ENCODE measurements at regions of chr1 and their contacts with region 1.

Region 1: GRCh38 chr1:43227143-43227764 is 42.5 kb upstream of the TMEM125 start:
- DNase-seq: peak; percentile 82
- CTCF ChIP-seq: peak; percentile 93

Region 2: DNA sequence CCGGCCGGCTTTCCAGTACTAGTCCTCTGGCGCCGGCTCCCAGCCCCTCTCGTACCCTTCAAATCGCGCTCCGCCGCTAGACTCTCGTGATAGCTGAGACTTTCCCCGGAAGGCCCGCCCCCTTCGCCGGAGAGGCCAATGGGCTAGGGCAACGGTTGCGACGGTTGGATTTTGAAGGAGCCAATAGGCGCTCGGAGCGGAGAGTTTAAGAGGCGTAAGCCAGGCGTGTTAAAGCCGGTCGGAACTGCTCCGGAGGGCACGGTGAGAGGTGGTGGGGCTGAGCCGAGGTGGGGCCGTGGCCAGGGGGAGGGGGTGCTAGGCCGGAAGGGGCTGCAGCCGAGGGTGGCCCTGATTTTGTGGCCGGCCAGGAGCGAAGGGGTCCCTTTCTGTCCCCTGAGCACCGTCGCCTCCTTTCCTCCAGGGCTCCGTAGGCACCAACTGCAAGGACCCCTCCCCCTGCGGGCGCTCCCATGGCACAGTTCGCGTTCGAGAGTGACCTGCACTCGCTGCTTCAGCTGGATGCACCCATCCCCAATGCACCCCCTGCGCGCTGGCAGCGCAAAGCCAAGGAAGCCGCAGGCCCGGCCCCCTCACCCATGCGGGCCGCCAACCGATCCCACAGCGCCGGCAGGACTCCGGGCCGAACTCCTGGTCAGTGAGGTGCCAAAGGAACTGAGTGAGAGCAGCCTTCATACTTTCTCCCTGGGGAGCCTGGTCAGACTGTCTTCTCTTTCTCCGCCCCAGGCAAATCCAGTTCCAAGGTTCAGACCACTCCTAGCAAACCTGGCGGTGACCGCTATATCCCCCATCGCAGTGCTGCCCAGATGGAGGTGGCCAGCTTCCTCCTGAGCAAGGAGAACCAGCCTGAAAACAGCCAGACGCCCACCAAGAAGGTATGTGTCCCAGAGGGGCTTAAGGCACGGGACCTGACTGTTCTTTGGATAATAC is 131.8 kb after region 1 on chr1 and contains the start of gene CDC20:
- in situ Hi-C with region 1: loop called (anchors 25 kb)
- DNase-seq: peak; percentile 97
- CTCF ChIP-seq: no peak

Region 3: DNA sequence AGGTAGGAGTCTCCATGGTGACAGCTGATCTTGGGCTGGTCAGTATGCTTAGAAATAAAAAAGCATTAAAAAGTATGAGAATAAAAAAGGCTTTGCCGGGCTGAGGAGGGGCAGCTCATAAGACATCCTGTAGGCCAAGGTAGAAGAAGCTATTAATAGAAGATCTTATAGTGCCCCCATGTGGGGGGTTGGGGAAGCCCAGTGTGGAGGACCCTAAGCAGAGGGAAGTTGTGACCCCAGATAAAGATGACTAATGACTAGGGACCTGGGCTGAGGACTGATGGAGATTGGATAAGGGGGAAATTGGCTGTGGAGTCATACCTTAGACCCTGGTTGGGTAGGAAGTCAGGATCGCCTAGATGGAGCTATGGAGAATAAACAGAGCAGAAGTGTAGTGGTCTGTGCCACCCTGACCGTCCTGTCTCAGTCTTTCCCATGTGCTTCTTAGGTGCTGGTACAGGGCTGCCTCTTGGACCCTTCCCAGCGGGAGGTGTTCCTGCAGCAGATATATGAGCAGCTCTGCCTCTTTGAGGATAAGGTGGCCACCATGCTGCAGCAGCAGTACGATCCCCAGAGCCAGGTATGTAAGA is 187.5 kb after region 1 on chr1:
- in situ Hi-C with region 1: loop called (anchors 10 kb)
- DNase-seq: no peak
- CTCF ChIP-seq: peak; percentile 12

Region 4: DNA sequence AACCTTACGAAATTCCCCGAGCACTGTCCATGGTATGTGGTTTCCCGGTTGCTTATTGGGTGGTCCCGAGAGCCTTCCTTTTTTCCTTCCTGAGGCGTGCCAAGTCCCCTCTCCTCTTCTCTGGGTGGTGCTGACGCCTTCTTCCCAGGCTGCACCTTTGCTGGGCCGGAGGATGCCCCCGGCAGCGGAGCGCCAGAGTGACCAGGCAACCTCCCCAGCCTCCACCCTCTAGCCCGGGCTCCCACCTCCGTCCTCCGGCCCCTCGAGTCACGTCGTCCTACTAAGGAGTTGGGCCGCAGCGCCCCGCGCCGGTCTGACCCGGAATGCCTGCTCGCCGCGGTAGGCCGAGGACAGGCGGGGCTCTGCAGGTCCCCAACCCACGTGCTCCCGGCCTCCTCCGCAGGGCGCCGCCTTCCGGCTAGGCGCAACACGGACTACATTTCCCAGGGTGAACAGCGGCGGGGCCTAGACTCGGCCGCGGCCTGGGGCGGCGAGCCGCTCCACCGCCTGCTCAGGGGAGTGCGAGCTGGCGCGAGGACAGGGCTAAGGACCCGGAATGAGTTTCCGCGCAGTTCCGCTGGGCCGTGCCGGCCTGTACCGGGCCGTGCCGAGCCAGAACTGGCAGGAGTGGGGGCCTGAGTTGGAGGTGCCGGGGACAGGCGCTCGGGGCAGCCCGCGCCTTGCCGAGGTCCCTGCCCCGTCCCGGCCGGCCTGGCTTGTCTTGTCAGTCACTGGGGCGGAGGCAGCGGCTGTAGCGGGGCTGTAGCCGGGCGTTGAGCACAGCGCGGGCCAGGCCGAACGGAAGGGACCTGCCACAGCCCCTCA is 719.2 kb after region 1 on chr1 and contains the start of gene IPO13:
- in situ Hi-C with region 1: loop called (anchors 25 kb)
- DNase-seq: peak; percentile 99
- CTCF ChIP-seq: peak; percentile 86

Measured in GM13976 (cell line).